A549 (cell line): ENCODE measurements at regions of chr17 and their contacts with region 1.

Region 1: GRCh38 chr17:29931231-29931932 is 1.4 kb upstream of the SSH2 start:
- DNase-seq: peak; percentile 67 to 85
- ATAC-seq: peak; percentile 60 to 75
- H3K4me3 ChIP-seq: peak overlapping the region; percentile 78
- H3K27ac ChIP-seq: peak overlapping the region; percentile 91 to 95; a peak in 4 of 6 replicates
- H3K4me1 ChIP-seq: peaks cover 31% of the 10 kb centered on the region
- CTCF ChIP-seq: peak; percentile 99
- EP300 ChIP-seq: no peak
- POLR2A ChIP-seq: no peak
- RAD21 ChIP-seq: peak; percentile 91 to 93

Region 2: DNA sequence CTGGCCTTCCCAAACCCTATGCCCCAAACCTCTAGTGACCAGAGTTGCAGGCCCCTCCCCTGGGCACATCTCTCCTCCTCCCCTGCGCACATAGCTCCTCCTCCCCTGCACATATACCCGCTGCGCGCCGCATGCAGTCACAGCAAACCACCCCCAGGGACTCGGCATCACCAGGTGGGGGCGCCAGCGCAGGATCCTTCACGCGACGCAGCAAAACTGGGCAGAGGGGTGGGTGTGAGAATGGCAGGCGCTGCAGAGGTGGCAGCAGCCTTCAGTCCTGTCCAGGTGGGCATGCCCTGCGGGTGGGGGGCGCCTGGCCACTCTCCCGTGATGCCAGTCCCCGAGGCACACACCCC is 314.3 kb before region 1 on chr17:
- CTCF ChIA-PET with region 1: interaction called, 29 read pairs
- POLR2A ChIA-PET with region 1: interaction called, 3 read pairs
- DNase-seq: peak; percentile 84 to 88
- ATAC-seq: peak; percentile 19 to 67; a peak in 3 of 6 replicates
- H3K4me3 ChIP-seq: peak overlapping the region; percentile 23; the same call in 1 of the 3 replicates
- H3K27ac ChIP-seq: peak overlapping the region in 1 of 2 experiments; percentile 82; a peak in 4 of 6 replicates
- H3K4me1 ChIP-seq: peaks cover 56% of the 10 kb centered on the region
- CTCF ChIP-seq: peak; percentile 58
- EP300 ChIP-seq: no peak
- POLR2A ChIP-seq: peak; percentile 21; the same call in 1 of the 2 replicates
- RAD21 ChIP-seq: peak in 1 of 2 experiments; percentile 23; a peak in 1 of 5 replicates

Region 3: DNA sequence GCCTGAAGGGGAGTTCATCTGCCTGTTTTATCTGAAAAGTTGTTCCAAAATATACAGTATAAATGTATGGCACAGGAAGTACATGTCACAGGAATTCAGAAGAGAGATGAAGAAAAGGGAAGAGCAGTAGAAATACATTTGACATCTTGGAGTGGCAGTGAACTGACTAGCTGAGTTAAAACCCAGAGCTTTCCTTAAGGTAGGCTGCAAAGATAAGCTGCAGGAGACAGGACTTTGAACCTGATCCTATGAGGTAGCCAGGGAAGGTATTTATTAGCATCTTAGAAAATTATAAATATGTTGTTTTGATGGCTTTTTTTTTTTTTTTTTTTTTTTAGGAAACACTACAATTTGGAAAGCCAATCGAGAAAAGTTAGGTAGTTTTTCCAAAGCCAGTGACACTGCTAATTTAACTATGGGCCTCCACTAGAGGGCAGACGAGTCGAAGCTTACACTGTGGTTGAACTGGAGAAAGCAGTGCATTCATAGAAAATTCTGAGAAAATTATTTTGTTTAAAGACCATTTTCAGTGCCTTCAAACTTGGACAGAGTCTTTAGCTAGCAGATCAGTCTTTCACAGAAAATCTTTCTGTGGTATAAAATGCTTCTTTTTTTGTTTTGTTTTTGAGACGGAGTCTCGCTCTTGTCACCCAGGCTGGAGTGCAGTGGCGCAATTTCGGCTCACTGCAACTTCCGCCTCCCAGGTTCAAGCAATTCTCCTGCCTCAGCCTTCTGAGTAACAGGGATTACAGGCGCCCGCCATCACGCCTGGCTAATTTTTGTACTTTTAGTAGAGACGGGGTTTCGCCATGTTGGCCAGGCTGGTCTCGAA is 123.6 kb before region 1 on chr17:
- CTCF ChIA-PET with region 1: interaction called, 536 read pairs
- POLR2A ChIA-PET with region 1: interaction called, 29 read pairs
- DNase-seq: peak; percentile 72 to 73
- ATAC-seq: peak; percentile 90 to 94
- H3K4me3 ChIP-seq: peak overlapping the region; percentile 47
- H3K27ac ChIP-seq: peak overlapping the region; percentile 62 to 78
- H3K4me1 ChIP-seq: no peaks in the 10 kb centered on the region
- CTCF ChIP-seq: peak; percentile 99
- EP300 ChIP-seq: no peak
- POLR2A ChIP-seq: no peak
- RAD21 ChIP-seq: peak; percentile 92 to 93

Region 4: GRCh38 chr17:29855686-29856085 is 75.7 kb before region 1 on chr17:
- CTCF ChIA-PET with region 1: interaction called, 31 read pairs
- POLR2A ChIA-PET with region 1: interaction called, 3 read pairs
- DNase-seq: no peak
- ATAC-seq: no peak
- H3K4me3 ChIP-seq: no peak overlapping the region
- H3K27ac ChIP-seq: no peak overlapping the region
- H3K4me1 ChIP-seq: peaks cover 15% of the 10 kb centered on the region
- CTCF ChIP-seq: no peak
- EP300 ChIP-seq: no peak
- POLR2A ChIP-seq: no peak
- RAD21 ChIP-seq: no peak

Region 5: DNA sequence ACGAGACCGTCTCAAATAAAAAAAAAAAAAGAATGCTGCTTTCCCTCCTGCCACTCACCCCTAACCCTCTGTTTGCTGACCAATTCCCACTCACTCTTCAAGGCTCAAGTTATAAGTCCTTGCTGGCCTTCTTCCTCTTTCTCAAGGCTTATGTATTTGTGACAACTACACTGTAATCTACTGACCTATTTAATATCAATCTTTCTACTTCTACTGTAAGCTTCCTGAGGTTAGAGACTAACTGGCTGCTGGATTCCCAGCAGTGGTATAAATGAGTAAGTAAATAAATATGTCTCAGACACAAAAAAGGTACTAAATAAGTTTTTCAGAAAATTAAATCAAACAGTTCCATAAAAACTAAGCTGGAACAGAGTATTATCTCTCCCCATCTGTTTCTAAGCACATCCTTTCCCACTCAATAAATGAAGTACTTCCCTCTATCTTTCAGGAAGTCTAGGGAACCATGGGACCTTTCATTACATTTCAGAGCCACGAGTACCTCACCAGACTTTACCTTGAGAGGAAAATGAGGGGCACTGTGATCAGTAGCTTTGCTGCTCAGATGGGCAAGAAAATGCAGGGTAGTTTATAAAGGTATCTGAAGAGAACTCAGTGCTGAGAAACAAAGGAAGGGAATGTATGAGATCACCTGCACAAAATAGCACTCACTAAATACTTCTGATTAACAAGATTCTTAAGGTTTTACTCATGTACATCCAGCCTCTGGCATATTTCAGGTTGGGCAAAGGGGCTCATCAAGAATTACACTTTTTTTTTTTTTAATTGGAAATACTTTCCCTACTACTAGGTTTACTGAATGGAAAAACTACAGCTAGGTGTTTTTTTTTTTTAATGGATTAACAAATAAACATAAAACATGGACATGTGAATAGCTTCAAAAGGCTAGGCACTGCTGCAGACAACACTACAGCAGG is 12.2 kb before region 1 on chr17:
- CTCF ChIA-PET with region 1: interaction called, 71 read pairs
- POLR2A ChIA-PET with region 1: no interaction called
- DNase-seq: no peak
- ATAC-seq: peak; percentile 54 to 61; a peak in 4 of 6 replicates
- H3K4me3 ChIP-seq: no peak overlapping the region
- H3K27ac ChIP-seq: peak overlapping the region in 1 of 2 experiments; percentile 25; a peak in 2 of 6 replicates
- H3K4me1 ChIP-seq: peaks cover 11% of the 10 kb centered on the region
- CTCF ChIP-seq: no peak
- EP300 ChIP-seq: no peak
- POLR2A ChIP-seq: no peak
- RAD21 ChIP-seq: no peak

Region 6: GRCh38 chr17:30000001-30000754 is 68.8 kb after region 1 on chr17:
- CTCF ChIA-PET with region 1: interaction called, 24 read pairs
- POLR2A ChIA-PET with region 1: no interaction called
- DNase-seq: peak in 1 of 2 experiments; percentile 27
- ATAC-seq: peak; percentile 65 to 69; a peak in 4 of 6 replicates
- H3K4me3 ChIP-seq: no peak overlapping the region
- H3K27ac ChIP-seq: no peak overlapping the region
- H3K4me1 ChIP-seq: peaks cover 11% of the 10 kb centered on the region
- CTCF ChIP-seq: peak; percentile 54
- EP300 ChIP-seq: no peak
- POLR2A ChIP-seq: no peak
- RAD21 ChIP-seq: peak; percentile 55 to 58